GM10248 (cell line): ENCODE measurements at regions of chr9 and their contacts with region 1.

Region 1: GRCh38 chr9:137223078-137223970 is 1.3 kb upstream of the RNF208 start:
- DNase-seq: peak; percentile 98
- CTCF ChIP-seq: no peak

Region 2: DNA sequence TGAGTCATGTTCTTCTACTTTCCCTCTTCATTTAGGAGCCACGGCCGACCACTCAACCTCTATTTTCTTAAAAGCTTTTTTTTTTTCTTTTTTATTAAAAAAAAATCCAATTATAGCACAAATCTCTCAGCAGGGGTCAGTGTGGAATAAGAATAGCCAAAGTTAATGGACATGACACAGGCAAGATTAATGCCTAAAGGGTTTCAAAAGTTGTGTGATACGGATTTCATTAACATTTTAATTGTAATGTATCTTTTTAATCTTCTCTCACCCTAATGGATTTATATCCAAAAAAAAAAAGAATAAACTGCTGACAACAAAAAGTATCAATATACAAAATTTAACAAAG is 1133.7 kb before region 1 on chr9:
- CTCF ChIA-PET with region 1: no interaction called
- POLR2A ChIA-PET with region 1: no interaction called
- DNase-seq: no peak
- CTCF ChIP-seq: peak; percentile 32

Region 3: DNA sequence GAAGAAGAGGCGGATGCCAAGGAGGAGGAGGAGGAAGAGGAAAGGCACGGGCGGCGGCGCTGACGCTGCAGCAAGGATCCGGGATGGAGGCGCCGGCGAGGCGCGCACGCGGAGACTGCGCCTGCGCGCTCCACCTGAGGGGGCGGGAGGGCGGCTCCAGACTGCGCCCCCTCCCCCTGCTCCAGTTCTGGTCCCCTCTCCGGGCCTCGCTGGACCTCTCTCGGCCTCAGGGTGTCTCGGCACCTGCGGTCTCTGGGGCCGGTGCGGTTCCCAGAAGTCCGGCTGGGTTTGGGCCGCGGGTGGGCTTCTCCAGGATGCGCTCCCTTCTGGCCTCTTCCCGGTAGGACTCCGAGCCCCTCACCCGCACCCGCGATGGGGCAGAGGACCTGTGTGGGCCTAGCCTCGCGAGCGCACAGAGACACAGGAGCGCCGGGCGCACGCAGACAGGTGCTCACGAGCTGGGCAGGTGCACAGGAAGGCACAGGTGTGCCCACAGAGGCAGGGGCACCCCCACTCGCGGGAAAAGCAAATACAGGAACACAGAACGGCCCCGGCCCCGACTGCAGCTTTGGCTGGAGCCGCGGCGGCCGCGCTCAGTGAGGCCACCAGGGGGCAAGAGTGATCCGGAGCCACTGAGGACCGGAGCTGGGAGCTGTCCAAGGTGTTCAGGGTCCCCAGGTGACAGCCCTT is 177.1 kb before region 1 on chr9 and contains the start of gene NPDC1:
- CTCF ChIA-PET with region 1: interaction called, 12 read pairs
- POLR2A ChIA-PET with region 1: no interaction called
- DNase-seq: peak; percentile 93
- CTCF ChIP-seq: peak; percentile 94

Region 4: GRCh38 chr9:137194388-137194787 is 28.9 kb before region 1 on chr9:
- CTCF ChIA-PET with region 1: interaction called, 18 read pairs
- POLR2A ChIA-PET with region 1: no interaction called
- DNase-seq: no peak
- CTCF ChIP-seq: no peak